ENCODE measurements at regions of chr13 and their contacts with region 1.

Region 1: DNA sequence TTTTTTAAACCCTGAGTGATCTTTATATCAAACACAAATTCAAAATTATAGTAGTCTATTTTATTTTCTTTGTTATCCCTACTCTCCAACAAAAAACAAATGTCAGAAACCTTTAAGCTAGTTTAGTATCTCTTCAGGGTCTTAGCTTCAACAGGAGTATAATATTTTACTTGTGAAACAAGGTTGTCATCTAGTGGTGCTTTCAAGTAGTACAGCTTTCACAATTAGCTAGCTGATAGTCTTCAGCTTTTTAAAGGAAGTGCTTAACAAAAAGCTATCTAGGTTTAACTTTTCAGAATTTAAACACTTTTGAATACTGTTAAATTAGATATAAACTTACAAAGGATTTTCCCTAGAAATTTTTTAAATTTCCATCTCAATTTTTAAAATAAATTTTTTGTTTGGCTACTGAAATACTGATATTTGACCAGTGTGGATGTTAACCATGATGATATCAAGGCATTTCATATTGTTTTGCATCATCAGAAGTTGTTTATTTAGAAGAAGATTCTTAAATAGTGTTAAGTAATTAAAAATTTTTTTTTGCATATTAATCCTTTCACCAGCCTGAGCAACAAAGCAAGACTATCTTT is 34.2 kb downstream of the TDRD3 start:
- DNase-seq: no peak
- ATAC-seq: peak; percentile 66 to 72
- H3K4me3 ChIP-seq: no peak overlapping the region
- H3K27ac ChIP-seq: no peak overlapping the region
- H3K4me1 ChIP-seq: no peaks in the 10 kb centered on the region
- H3K27me3 ChIP-seq: no peaks in the 10 kb centered on the region

Region 2: GRCh38 chr13:60009300-60010253 is 421.6 kb before region 1 on chr13:
- intact Hi-C with region 1: loop called in 1 of 4 experiments (anchors 10 kb)
- DNase-seq: peak in 1 of 3 donors; percentile 60
- ATAC-seq: no peak
- H3K4me3 ChIP-seq: no peak overlapping the region
- H3K27ac ChIP-seq: no peak overlapping the region
- H3K4me1 ChIP-seq: no peaks in the 10 kb centered on the region
- H3K27me3 ChIP-seq: no peaks in the 10 kb centered on the region